ENCODE measurements at regions of chr1 and their contacts with region 1.

Region 1: DNA sequence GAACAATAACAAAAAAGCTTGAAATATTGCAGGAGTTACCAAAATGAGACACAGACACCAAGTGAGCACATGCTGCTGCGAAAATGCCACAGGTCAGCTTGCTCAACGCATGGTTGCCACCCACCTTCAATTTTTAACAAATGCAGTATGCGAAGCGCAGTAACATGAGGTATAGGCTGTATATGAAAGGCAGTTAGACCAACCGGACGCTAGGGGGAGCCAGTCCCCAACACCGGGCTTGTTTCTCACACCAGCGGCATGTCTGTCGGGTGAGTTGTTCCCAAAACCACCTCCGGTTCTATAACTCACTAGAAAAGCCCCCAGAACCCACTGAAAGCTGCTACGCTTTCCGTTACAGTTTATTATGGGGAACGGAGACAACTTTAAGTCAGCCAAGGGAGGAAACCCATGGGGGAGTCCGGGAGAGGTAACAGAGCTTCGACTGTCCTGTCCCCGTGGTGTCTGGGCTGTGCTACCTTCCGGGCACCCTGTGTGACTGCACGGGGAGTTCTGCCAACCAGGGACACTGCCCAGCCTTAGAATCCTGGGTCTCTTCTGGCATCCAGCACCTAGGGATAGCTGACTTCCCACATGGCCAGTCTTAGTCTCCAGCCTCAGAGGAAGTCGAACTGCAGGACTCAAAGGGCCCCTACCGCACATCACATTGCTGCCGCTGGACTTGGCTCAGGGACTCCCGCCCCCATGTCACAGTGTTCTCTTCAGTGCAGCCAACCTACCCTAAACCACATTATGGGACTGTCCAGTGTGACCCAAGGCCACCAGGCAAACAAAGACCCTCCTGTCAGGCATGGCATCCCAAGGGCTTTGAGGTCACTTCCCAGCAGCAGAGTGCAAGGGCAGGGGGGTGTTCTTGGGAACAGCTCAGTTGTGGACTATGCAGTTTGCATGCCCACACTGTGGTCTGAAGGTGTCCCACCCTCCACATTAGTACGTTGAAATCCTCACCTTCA is 14.0 kb downstream of the RNF187 start:
- DNase-seq: peak; percentile 77
- H3K4me3 Mint-ChIP-seq: peak overlapping the region; percentile 74
- H3K27ac Mint-ChIP-seq: no peak overlapping the region
- H3K4me1 Mint-ChIP-seq: peaks cover 26% of the 10 kb centered on the region
- H3K27me3 Mint-ChIP-seq: peaks cover 7% of the 10 kb centered on the region

Region 2: GRCh38 chr1:228131766-228132165 is 369.4 kb before region 1 on chr1:
- intact Hi-C with region 1: loop called (anchors 5 kb)
- DNase-seq: no peak
- H3K4me3 Mint-ChIP-seq: no peak overlapping the region
- H3K27ac Mint-ChIP-seq: no peak overlapping the region
- H3K4me1 Mint-ChIP-seq: peaks cover 9% of the 10 kb centered on the region
- H3K27me3 Mint-ChIP-seq: peaks cover 24% of the 10 kb centered on the region

Region 3: DNA sequence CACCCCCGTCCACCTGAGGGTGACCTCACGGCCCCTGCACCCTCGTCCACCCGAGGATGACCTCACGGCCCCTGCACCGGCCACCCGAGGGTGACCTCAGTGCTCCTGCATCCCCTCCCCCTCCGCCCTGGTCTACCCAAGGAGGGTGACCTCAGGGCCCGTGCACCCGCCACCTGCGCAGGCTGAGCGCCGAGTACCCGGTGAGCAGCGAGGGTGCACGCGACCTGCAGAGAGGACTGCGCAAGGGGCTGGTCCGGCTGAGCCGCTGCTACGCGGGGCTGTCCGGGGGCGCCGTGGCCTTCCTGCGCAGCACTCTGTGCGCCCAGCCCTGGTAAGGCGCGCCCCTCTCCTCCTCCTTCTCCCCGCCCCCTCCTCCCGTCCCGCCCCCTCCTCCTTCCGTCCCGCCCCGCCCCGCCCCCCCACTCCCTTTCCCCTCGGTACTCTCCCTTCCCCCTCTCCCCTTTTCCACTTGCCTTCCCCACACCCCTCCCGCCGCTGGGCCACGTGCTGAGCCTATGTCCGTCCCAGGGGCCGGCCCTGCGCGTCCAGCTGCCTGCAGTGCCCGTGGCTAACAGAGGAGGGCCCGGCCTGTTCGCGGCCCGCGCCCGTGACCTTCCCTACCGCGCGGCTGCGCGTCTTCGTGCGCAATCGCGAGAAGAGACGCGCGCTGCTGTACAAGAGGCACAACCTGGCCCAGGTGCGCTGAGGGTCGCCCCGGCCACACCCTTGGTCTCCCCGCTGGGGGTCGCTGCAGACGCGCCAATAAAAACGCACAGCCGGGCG is 122.9 kb before region 1 on chr1:
- intact Hi-C with region 1: loop called (anchors 1 kb)
- DNase-seq: peak; percentile 41
- H3K4me3 Mint-ChIP-seq: peak overlapping the region; percentile 79
- H3K27ac Mint-ChIP-seq: no peak overlapping the region
- H3K4me1 Mint-ChIP-seq: no peaks in the 10 kb centered on the region
- H3K27me3 Mint-ChIP-seq: peaks cover 25% of the 10 kb centered on the region

Region 4: DNA sequence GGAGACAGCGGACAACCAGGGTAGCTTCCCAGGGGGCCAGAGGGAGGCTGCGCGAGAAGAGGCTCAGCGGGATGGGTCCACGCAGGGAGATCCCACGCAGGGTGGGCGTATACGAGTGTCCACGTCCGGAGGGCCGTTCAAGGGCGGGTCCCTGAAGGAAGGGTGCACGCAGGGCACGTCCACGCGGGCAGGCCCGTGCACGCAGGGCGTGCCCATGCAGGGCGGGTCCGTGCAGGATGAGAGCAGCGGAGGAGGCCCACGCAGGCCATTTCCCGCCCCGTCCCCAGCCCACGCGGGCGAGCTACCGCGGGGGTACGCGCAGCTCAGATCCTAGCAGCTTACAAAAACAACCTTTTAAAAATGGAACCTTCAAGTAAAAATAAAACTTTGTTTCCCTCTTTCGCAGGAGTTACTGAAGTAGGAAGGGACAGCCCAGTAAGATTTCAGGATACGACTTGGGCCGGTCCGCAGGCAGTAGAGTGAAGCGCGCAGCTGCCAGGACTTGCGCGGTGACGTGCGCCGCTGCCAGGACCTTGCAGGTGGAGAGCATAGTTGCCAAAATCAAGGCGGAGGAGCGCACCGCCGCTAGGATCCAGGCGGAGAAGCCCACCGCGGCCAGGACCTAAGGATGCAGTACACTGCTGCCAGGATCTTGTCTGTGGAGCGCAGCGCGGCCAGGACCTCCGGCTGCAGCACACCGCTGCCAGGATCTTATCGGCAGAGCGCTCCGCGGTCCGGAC is 14.4 kb before region 1 on chr1:
- intact Hi-C with region 1: loop called (anchors 1 kb)
- DNase-seq: peak; percentile 84
- H3K4me3 Mint-ChIP-seq: peak overlapping the region; percentile 97
- H3K27ac Mint-ChIP-seq: peak overlapping the region; percentile 99
- H3K4me1 Mint-ChIP-seq: peaks cover 29% of the 10 kb centered on the region
- H3K27me3 Mint-ChIP-seq: peaks cover 7% of the 10 kb centered on the region

Region 5: DNA sequence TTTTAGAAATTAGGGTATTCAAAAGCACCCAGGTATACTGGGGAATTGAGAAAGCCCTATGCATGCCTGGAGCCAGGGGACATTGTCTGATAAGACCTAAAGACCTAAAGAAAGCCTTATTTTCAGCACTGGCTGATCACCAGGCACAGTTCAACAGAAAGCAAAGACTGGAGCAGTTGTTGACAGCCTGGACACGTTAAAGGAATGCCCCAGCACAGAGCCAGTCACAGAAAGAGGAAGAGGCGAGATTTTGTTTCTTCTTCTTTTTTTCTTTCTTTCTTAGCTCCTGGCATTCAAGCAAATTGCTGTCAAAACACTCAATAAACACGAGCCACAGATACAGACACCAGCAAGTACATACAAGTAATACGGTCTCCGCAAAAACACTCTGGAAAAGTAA is 26.4 kb after region 1 on chr1:
- intact Hi-C with region 1: no loop called
- DNase-seq: no peak
- H3K4me3 Mint-ChIP-seq: no peak overlapping the region
- H3K27ac Mint-ChIP-seq: no peak overlapping the region
- H3K4me1 Mint-ChIP-seq: no peaks in the 10 kb centered on the region
- H3K27me3 Mint-ChIP-seq: peaks cover 2% of the 10 kb centered on the region

Region 6: DNA sequence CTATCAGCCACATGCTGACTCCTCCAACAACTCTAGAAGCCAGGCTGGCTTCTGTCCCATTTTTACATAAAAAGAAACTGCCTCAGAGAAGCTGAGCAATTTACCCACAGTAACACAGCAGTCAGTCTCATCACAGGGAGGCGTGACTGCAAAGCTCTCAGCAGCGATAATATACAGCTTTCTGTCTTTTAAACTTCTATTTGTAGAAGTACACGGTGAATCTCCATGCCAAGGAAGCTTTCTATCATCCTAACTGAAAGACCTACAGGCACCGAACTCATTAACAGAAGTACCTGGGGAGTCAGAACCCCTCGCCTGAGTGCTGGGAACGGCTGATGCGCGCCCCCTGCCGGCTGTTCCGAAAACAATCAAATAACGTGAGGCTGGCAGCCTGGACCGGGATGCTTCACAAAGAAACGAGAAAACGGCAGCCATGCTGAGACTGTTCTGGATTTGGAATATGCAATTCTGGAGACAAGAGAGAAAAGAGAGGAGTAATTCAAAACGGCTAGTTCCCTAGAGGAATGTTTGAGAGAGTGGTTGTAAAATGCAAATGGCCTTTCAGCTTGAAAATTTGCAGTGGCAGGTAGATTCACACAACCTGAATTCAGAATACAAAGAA is 726.2 kb after region 1 on chr1:
- intact Hi-C with region 1: loop called (anchors 5 kb)
- DNase-seq: peak; percentile 66
- H3K4me3 Mint-ChIP-seq: no peak overlapping the region
- H3K27ac Mint-ChIP-seq: no peak overlapping the region
- H3K4me1 Mint-ChIP-seq: peaks cover 11% of the 10 kb centered on the region
- H3K27me3 Mint-ChIP-seq: peaks cover 15% of the 10 kb centered on the region

Measured in activated T-helper 1 cell treated with anti-CD3 and anti-CD28 coated beads, Interleukin-12 subunit alpha, Interleukin-12 subunit beta, Interleukin-2, Interleukin-4 antibody, amounts not matched to agents 30 ng/mL and 10 ng/mL and 1 ng/mL, durations not matched to agents 14 hours and 24 hours and 36 hours (primary cell).